ENCODE measurements at regions of chr13 and their contacts with region 1.

Region 1: DNA sequence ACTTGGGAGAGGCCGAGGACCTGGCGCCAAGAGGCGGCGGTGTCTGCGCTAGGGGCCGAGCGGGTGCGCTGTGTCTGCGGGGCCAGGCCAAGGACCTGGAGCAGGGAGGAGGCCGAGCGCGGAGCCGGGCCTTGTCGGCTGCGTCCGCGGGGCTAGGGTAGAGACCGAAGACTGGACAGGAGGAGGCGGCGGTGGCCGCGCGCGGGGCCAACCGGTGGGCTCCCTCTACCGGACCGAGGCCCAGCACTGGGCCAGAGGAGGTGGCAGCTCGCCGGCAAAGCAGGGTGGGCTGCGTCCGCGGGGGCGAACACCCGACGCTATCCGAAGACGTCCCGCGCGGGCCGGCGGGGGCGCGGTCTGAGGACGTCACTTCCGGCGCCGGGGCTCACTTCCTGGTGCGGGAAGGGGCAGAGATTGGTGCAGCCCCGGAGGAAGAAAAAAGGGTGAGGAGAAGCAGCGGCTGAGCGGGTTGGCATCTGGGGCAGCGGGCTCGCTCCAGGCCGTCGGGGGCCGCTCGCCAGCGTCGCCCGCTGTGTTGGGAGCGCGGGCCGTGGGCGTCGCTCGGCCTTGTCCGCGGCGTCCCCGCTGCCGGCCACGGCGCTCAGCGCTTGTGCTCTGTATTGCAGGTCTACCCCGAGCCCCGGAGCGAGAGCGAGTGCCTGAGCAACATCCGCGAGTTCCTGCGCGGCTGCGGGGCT is 38.3 kb downstream of the ARHGEF7 start:
- DNase-seq: peak; percentile 91 to 96
- H3K4me3 ChIP-seq: peak overlapping the region; percentile 81
- H3K4me3 Mint-ChIP-seq: peak overlapping the region; percentile 81
- H3K27ac Mint-ChIP-seq: peak overlapping the region; percentile 96
- H3K4me1 ChIP-seq: peaks cover 7% of the 10 kb centered on the region; the same call in 1 of the 2 replicates
- H3K4me1 Mint-ChIP-seq: peaks cover 13% of the 10 kb centered on the region
- H3K27me3 ChIP-seq: no peaks in the 10 kb centered on the region
- H3K27me3 Mint-ChIP-seq: no peaks in the 10 kb centered on the region
- CTCF ChIP-seq: no peak

Region 2: DNA sequence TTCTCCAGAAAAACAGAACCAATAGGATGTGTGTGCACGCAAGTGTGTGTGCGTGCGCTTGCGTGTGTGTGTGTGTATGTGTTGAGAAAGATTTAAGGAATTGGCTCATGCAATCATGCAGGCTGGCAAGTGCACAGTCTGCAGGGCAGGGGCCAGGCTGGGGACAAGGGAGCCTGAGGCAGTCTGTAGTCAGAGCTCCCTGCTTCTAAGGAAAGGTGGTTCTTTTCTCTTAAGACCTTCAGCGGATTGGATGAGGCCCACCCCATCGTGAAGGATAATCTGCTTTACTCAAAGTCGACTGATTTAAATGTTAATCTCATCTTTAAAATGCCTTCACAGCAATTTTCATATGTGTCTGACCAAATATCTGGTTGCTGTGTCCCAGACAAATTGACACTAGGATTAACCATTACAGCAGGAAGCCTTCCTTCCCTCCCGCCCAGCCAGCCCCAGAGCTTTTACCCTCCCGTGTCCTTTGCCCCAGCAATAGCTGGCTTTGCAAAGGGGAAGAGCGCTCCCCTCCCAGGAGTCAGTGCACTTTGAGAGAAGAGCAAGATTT is 553.1 kb before region 1 on chr13:
- CTCF ChIA-PET with region 1: no interaction called
- POLR2A ChIA-PET with region 1: no interaction called
- intact Hi-C with region 1: loop called (anchors 5 kb)
- DNase-seq: peak; percentile 76 to 79
- H3K4me3 ChIP-seq: no peak overlapping the region
- H3K4me3 Mint-ChIP-seq: peak overlapping the region; percentile 61
- H3K27ac Mint-ChIP-seq: peak overlapping the region; percentile 52
- H3K4me1 ChIP-seq: peaks cover 40% of the 10 kb centered on the region
- H3K4me1 Mint-ChIP-seq: peaks cover 36% of the 10 kb centered on the region
- H3K27me3 ChIP-seq: no peaks in the 10 kb centered on the region
- H3K27me3 Mint-ChIP-seq: no peaks in the 10 kb centered on the region
- CTCF ChIP-seq: no peak

Region 3: DNA sequence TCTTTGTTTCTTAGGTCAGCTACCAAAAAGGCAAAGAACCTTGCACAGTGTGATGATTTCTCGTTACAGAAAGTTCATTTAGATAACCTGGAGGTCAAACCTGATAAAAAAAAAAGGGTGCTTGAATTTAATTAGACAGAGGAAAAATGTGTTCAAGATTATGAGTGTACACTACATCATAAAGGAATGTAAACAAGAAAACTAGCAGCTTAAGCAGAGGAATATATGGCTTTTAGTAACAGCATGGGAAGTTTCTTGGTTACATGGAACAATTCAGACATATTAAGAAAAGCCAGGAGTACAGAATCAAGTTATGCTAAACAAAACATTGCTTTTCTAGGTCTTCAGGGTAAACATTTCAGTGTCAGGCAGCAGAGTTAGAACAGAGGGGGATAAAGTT is 407.0 kb before region 1 on chr13:
- CTCF ChIA-PET with region 1: no interaction called
- POLR2A ChIA-PET with region 1: no interaction called
- intact Hi-C with region 1: no loop called
- DNase-seq: no peak
- H3K4me3 ChIP-seq: no peak overlapping the region
- H3K4me3 Mint-ChIP-seq: no peak overlapping the region
- H3K27ac Mint-ChIP-seq: no peak overlapping the region
- H3K4me1 ChIP-seq: 0 out of 2 replicates have a peak, but pooled peaks cover 5% of the 10 kb centered on the region
- H3K4me1 Mint-ChIP-seq: peaks cover 6% of the 10 kb centered on the region
- H3K27me3 ChIP-seq: no peaks in the 10 kb centered on the region
- H3K27me3 Mint-ChIP-seq: no peaks in the 10 kb centered on the region
- CTCF ChIP-seq: no peak

Region 4: GRCh38 chr13:111066544-111066943 is 86.9 kb before region 1 on chr13:
- CTCF ChIA-PET with region 1: interaction called, 3 read pairs
- POLR2A ChIA-PET with region 1: interaction called, 4 read pairs
- intact Hi-C with region 1: loop called (anchors 5 kb)
- DNase-seq: no peak
- H3K4me3 ChIP-seq: no peak overlapping the region
- H3K4me3 Mint-ChIP-seq: peak overlapping the region; percentile 74
- H3K27ac Mint-ChIP-seq: no peak overlapping the region
- H3K4me1 ChIP-seq: no peaks in the 10 kb centered on the region
- H3K4me1 Mint-ChIP-seq: no peaks in the 10 kb centered on the region
- H3K27me3 ChIP-seq: no peaks in the 10 kb centered on the region
- H3K27me3 Mint-ChIP-seq: peaks cover 2% of the 10 kb centered on the region
- CTCF ChIP-seq: no peak

Region 5: GRCh38 chr13:111115965-111116500 is 37.4 kb before region 1 on chr13:
- CTCF ChIA-PET with region 1: no interaction called
- POLR2A ChIA-PET with region 1: no interaction called
- intact Hi-C with region 1: no loop called
- DNase-seq: no peak
- H3K4me3 ChIP-seq: peak overlapping the region; percentile 21; the same call in 1 of the 2 replicates
- H3K4me3 Mint-ChIP-seq: peak overlapping the region; percentile 79
- H3K27ac Mint-ChIP-seq: no peak overlapping the region
- H3K4me1 ChIP-seq: peaks cover 11% of the 10 kb centered on the region; the same call in 1 of the 2 replicates
- H3K4me1 Mint-ChIP-seq: no peaks in the 10 kb centered on the region
- H3K27me3 ChIP-seq: peaks cover 6% of the 10 kb centered on the region
- H3K27me3 Mint-ChIP-seq: peaks cover 40% of the 10 kb centered on the region
- CTCF ChIP-seq: no peak

Region 6: GRCh38 chr13:111216166-111216960 is 62.9 kb after region 1 on chr13:
- CTCF ChIA-PET with region 1: no interaction called
- POLR2A ChIA-PET with region 1: no interaction called
- intact Hi-C with region 1: loop called (anchors 1 kb)
- DNase-seq: peak; percentile 50 to 63
- H3K4me3 ChIP-seq: no peak overlapping the region
- H3K4me3 Mint-ChIP-seq: no peak overlapping the region
- H3K27ac Mint-ChIP-seq: no peak overlapping the region
- H3K4me1 ChIP-seq: peaks cover 2% of the 10 kb centered on the region; the same call in 1 of the 2 replicates
- H3K4me1 Mint-ChIP-seq: peaks cover 8% of the 10 kb centered on the region
- H3K27me3 ChIP-seq: no peaks in the 10 kb centered on the region
- H3K27me3 Mint-ChIP-seq: no peaks in the 10 kb centered on the region
- CTCF ChIP-seq: peak; percentile 37 to 67